PC-9 (cell line): ENCODE measurements at regions of chr3 and their contacts with region 1.

Region 1: GRCh38 chr3:149377408-149378377 is at the start of gene TM4SF1:
- DNase-seq: peak; percentile 88 to 97
- H3K4me3 ChIP-seq: peak within 1 kb of the TSS; percentile 92
- H3K27ac ChIP-seq: peak within 1 kb of the TSS; percentile 99
- H3K4me1 ChIP-seq: peaks cover 60% of the 10 kb centered on the region
- H3K27me3 ChIP-seq: no peaks in the 10 kb centered on the region
- CTCF ChIP-seq: no peak
- total RNA-seq, gene TM4SF1: 146 and 225 TPM in 2 replicates

Region 2: GRCh38 chr3:147851062-147851461 is 1526.6 kb before region 1 on chr3:
- CTCF ChIA-PET with region 1: no interaction called
- POLR2A ChIA-PET with region 1: no interaction called
- intact Hi-C with region 1: no loop called
- DNase-seq: no peak
- H3K4me3 ChIP-seq: no peak overlapping the region
- H3K27ac ChIP-seq: no peak overlapping the region
- H3K4me1 ChIP-seq: no peaks in the 10 kb centered on the region
- H3K27me3 ChIP-seq: no peaks in the 10 kb centered on the region
- CTCF ChIP-seq: no peak

Region 3: GRCh38 chr3:149299938-149300791 is 77.5 kb before region 1 on chr3:
- CTCF ChIA-PET with region 1: no interaction called
- POLR2A ChIA-PET with region 1: interaction called, 6 read pairs
- intact Hi-C with region 1: loop called (anchors 2 kb)
- DNase-seq: peak; percentile 76 to 99
- H3K4me3 ChIP-seq: peak overlapping the region; percentile 42; the same call in 1 of the 2 replicates
- H3K27ac ChIP-seq: peak overlapping the region; percentile 100
- H3K4me1 ChIP-seq: peaks cover 55% of the 10 kb centered on the region
- H3K27me3 ChIP-seq: no peaks in the 10 kb centered on the region
- CTCF ChIP-seq: no peak

Region 4: GRCh38 chr3:149366941-149367840 is 10.5 kb before region 1 on chr3:
- CTCF ChIA-PET with region 1: no interaction called
- POLR2A ChIA-PET with region 1: interaction called, 35 read pairs
- intact Hi-C with region 1: loop called (anchors 1 kb)
- DNase-seq: peak; percentile 86 to 99
- H3K4me3 ChIP-seq: 0 out of 2 replicates have a peak overlapping the region, but pooled peaks have one; percentile 6
- H3K27ac ChIP-seq: peak overlapping the region; percentile 99
- H3K4me1 ChIP-seq: peaks cover 63% of the 10 kb centered on the region
- H3K27me3 ChIP-seq: no peaks in the 10 kb centered on the region
- CTCF ChIP-seq: no peak

Region 5: GRCh38 chr3:149393345-149394160 is 15.9 kb after region 1 on chr3:
- CTCF ChIA-PET with region 1: no interaction called
- POLR2A ChIA-PET with region 1: interaction called, 5 read pairs
- intact Hi-C with region 1: loop called (anchors 2 kb)
- DNase-seq: peak; percentile 37 to 64
- H3K4me3 ChIP-seq: no peak overlapping the region
- H3K27ac ChIP-seq: no peak overlapping the region
- H3K4me1 ChIP-seq: peaks cover 70% of the 10 kb centered on the region
- H3K27me3 ChIP-seq: no peaks in the 10 kb centered on the region
- CTCF ChIP-seq: peak; percentile 71

Region 6: DNA sequence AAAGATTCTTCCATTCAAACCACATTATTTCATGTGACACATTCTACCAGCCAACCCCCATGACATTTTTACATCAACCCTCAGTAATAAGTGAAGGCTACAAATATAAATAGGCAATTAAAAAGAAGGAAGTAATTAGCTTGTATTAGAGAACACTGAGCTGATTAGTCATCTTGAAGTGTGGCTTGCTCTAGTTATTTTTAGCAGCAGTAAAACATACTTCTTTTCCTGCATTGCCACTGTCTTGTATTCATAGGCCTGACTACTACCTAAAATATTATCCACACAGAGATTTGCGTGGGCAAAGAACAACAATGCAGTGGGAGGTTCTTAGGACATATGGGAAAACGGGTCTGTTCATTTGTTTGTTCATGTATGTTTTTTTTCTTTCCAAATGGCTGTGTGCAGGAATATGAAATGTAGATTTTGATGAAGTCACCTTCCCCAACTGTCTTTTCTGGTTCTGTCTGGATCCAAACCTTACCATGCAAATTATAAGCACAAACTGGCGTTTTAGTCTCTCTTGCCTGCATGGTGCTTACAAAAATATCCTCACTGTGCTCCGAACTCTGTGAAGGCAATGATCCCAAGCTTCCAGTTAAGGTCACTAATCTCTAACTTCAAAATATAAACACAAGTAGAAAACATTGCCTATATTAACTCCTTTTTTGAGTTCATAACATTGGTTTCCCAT is 65.3 kb after region 1 on chr3:
- CTCF ChIA-PET with region 1: no interaction called
- POLR2A ChIA-PET with region 1: interaction called, 11 read pairs
- intact Hi-C with region 1: no loop called
- DNase-seq: peak in 1 of 2 experiments; percentile 65
- H3K4me3 ChIP-seq: no peak overlapping the region
- H3K27ac ChIP-seq: peak overlapping the region; percentile 56
- H3K4me1 ChIP-seq: peaks cover 24% of the 10 kb centered on the region
- H3K27me3 ChIP-seq: no peaks in the 10 kb centered on the region
- CTCF ChIP-seq: no peak

Region 7: DNA sequence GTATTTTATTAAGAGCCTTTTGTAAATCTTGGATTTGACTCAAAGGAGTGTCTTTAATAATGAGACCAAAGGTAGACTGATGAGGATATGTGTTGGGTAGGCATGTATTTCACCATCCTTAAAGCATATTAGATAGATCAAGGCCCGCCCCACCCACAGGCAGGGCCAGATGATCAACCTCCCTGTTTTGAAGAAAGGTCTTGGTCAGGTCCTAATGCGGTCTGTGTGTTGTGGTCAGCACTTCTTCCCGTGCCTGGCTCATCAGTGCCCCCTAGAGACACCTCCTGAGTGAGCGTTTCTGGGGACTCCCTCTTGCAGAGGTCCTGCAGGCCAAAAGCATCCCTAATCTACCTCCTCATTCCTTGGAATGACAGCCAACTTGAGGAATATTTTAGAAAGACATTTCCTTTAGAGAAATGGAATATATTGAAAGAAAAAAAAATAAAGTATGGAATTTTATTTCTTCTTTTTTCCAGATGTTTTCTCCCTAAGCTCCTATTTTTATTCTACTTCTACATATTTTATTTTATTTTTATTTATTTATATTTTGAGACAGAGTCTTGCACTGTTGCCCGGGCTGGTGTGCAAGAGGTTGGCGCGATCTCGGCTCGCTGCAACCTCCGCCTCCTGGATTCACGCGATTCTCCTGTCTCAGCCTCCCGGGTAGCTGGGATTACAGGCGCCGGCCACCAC is 102.8 kb after region 1 on chr3:
- CTCF ChIA-PET with region 1: no interaction called
- POLR2A ChIA-PET with region 1: interaction called, 4 read pairs
- intact Hi-C with region 1: loop called (anchors 1 kb)
- DNase-seq: peak; percentile 81 to 89
- H3K4me3 ChIP-seq: no peak overlapping the region
- H3K27ac ChIP-seq: peak overlapping the region; percentile 46
- H3K4me1 ChIP-seq: peaks cover 19% of the 10 kb centered on the region
- H3K27me3 ChIP-seq: no peaks in the 10 kb centered on the region
- CTCF ChIP-seq: peak; percentile 87

Region 8: GRCh38 chr3:149494022-149494758 is 116.5 kb after region 1 on chr3:
- CTCF ChIA-PET with region 1: interaction called, 3 read pairs
- POLR2A ChIA-PET with region 1: interaction called, 10 read pairs
- intact Hi-C with region 1: no loop called
- DNase-seq: peak in 1 of 2 experiments; percentile 51
- H3K4me3 ChIP-seq: no peak overlapping the region
- H3K27ac ChIP-seq: no peak overlapping the region
- H3K4me1 ChIP-seq: no peaks in the 10 kb centered on the region
- H3K27me3 ChIP-seq: no peaks in the 10 kb centered on the region
- CTCF ChIP-seq: peak; percentile 73